Psoas muscle (tissue), 8 donors: ENCODE measurements at regions of chr5 and their contacts with region 1.

Region 1: GRCh38 chr5:149497357-149497756 is 53.9 kb downstream of the CSNK1A1 start:
- DNase-seq: no peak
- ATAC-seq: no peak
- H3K4me3 ChIP-seq: no peak overlapping the region
- H3K27ac ChIP-seq: peak overlapping the region; percentile 28
- H3K4me1 ChIP-seq: peaks cover 17% of the 10 kb centered on the region
- H3K27me3 ChIP-seq: no peaks in the 10 kb centered on the region
- CTCF ChIP-seq: no peak

Region 2: GRCh38 chr5:149466457-149466972 is 30.8 kb before region 1 on chr5:
- intact Hi-C with region 1: no loop called
- DNase-seq: peak; percentile 62 to 72
- ATAC-seq: peak; percentile 77 to 91 (median 86)
- H3K4me3 ChIP-seq: peak overlapping the region; percentile 7
- H3K27ac ChIP-seq: peak overlapping the region; percentile 86
- H3K4me1 ChIP-seq: peaks cover 36% of the 10 kb centered on the region
- H3K27me3 ChIP-seq: no peaks in the 10 kb centered on the region
- CTCF ChIP-seq: no peak

Region 3: DNA sequence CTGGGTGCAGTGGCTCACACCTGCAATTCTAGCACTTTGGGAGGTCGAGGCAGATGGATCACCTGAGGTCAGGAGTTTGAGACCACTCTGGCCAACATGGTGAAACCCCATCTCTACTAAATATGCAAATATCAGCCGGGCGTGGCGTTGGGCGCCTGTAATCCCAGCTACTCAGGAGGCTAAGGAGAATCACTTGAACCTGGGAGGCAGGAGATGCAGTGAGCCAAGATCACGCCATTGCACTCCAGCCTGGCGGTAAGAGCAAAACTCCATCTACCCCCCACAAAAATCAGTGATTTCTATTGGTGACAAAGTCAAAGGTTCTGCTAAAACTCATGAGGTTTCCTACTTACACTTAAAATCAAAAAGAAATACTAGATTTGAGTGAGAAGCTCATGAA is 35.1 kb after region 1 on chr5:
- intact Hi-C with region 1: no loop called
- DNase-seq: no peak
- ATAC-seq: no peak
- H3K4me3 ChIP-seq: no peak overlapping the region
- H3K27ac ChIP-seq: no peak overlapping the region
- H3K4me1 ChIP-seq: peaks cover 88% of the 10 kb centered on the region
- H3K27me3 ChIP-seq: no peaks in the 10 kb centered on the region
- CTCF ChIP-seq: no peak

Region 4: GRCh38 chr5:149544028-149544420 is 46.7 kb after region 1 on chr5:
- intact Hi-C with region 1: loop called in 1 of 2 experiments (anchors 5 kb)
- DNase-seq: no peak
- ATAC-seq: no peak
- H3K4me3 ChIP-seq: peak overlapping the region; percentile 12
- H3K27ac ChIP-seq: peak overlapping the region; percentile 20
- H3K4me1 ChIP-seq: peaks cover 86% of the 10 kb centered on the region
- H3K27me3 ChIP-seq: no peaks in the 10 kb centered on the region
- CTCF ChIP-seq: no peak